ENCODE measurements at regions of chr1 and their contacts with region 1.

Region 1: DNA sequence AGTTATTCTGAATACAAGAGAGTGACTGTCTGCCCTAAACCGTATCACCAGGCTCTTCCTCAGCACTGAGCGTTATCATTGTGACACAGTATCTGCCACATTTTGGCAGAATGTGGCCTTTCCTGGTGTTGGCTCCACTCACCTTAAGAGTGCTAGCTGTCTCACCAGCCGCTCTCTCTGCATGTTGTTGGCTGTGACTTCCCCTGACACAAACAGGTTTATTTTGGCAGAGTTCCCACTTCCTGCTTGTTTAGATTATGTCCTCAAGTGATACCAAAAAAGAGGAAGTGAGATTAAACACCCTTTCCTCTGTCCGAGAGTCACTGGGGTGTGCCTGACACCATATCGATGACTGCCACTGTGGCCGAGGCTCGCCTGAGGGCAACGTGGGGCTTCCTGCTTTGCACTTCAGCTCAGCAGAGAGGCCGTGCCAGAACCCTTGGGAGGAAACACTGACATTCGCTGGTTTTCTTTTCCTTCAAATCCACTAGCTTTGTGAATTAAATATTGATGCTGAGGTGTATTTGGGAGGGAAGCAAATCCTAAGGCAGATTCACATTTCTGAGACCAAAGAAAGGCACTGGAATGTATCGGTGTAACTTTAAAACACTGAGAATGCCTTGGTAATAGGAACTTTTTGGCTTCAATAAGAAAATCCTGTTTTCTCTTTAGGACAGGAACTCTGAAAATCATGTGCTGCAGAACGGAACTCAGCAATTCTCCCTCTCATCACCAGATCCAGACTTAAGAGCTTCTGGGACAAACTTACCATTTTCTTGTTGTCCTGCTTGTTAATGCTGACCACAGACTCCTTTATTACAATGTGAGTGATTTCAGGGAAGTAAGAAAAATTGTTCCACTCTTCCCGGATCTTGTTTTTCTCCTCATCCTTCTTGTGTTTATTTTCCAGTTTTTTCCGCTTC is 102.1 kb downstream of the JAK1 start:
- DNase-seq: peak; percentile 84
- ATAC-seq: peak; percentile 90
- H3K4me3 ChIP-seq: no peak overlapping the region
- H3K27ac ChIP-seq: peak overlapping the region; percentile 44
- H3K4me1 ChIP-seq: peaks cover 17% of the 10 kb centered on the region
- H3K27me3 ChIP-seq: no peaks in the 10 kb centered on the region
- CTCF ChIP-seq: no peak

Region 2: GRCh38 chr1:64948905-64949833 is 84.9 kb after region 1 on chr1:
- CTCF ChIA-PET with region 1: no interaction called
- POLR2A ChIA-PET with region 1: no interaction called
- intact Hi-C with region 1: no loop called
- DNase-seq: peak; percentile 59
- ATAC-seq: peak; percentile 71; the same call in 1 of the 2 replicates
- H3K4me3 ChIP-seq: no peak overlapping the region
- H3K27ac ChIP-seq: no peak overlapping the region
- H3K4me1 ChIP-seq: peaks cover 8% of the 10 kb centered on the region
- H3K27me3 ChIP-seq: no peaks in the 10 kb centered on the region
- CTCF ChIP-seq: no peak

Region 3: GRCh38 chr1:65044378-65044777 is 180.1 kb after region 1 on chr1:
- CTCF ChIA-PET with region 1: no interaction called
- POLR2A ChIA-PET with region 1: no interaction called
- intact Hi-C with region 1: loop called (anchors 5 kb)
- DNase-seq: no peak
- ATAC-seq: no peak
- H3K4me3 ChIP-seq: no peak overlapping the region
- H3K27ac ChIP-seq: no peak overlapping the region
- H3K4me1 ChIP-seq: no peaks in the 10 kb centered on the region
- H3K27me3 ChIP-seq: no peaks in the 10 kb centered on the region
- CTCF ChIP-seq: no peak